CD4-positive, alpha-beta T cell (primary cell): ENCODE measurements at regions of chr5 and their contacts with region 1.

Region 1: GRCh38 chr5:170100066-170100943 is 5.4 kb upstream of the FOXI1 start:
- DNase-seq: peak; percentile 48 to 79 (median 60)
- ATAC-seq: peak; percentile 56
- H3K4me3 ChIP-seq: no peak overlapping the region
- H3K4me3 Mint-ChIP-seq: no peak overlapping the region
- H3K27ac ChIP-seq: no peak overlapping the region
- H3K27ac Mint-ChIP-seq: no peak overlapping the region
- H3K4me1 ChIP-seq: peaks cover 2% of the 10 kb centered on the region
- H3K4me1 Mint-ChIP-seq: no peaks in the 10 kb centered on the region
- H3K27me3 ChIP-seq: no peaks in the 10 kb centered on the region
- H3K27me3 Mint-ChIP-seq: peaks cover 20% of the 10 kb centered on the region
- CTCF ChIP-seq: peak; percentile 67

Region 2: DNA sequence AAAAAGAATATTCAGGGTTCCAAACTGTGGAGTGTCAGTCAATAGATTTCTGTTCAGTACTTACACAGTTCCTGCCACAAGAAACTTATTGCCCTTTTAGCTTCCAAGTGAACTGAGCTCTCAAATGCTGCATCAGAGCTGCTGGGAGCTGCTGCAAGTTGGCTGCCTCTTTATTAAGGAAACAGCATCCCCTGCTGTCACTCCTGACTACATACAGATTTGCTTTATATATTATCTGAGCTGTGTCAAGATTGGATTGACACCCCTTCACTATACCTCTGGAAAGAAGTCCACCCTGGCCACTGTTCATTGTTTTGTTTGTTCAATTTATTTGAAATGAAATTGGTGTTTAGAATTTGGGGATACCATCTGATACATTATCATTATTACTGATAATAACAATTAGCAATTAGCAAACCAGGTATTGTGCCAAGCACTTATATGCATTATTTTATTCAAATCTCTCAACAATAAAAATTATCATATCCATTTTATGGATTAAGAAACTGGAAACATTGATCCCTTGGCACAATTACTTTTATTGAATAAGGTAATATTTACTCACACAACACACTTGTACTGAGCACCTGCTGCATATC is 116.1 kb after region 1 on chr5:
- CTCF ChIA-PET with region 1: no interaction called
- POLR2A ChIA-PET with region 1: no interaction called
- intact Hi-C with region 1: loop called in 1 of 2 experiments (anchors 2 kb)
- DNase-seq: peak in 4 of 14 experiments; percentile 1 to 38 (median 20)
- ATAC-seq: no peak
- H3K4me3 ChIP-seq: no peak overlapping the region
- H3K4me3 Mint-ChIP-seq: no peak overlapping the region
- H3K27ac ChIP-seq: no peak overlapping the region
- H3K27ac Mint-ChIP-seq: no peak overlapping the region
- H3K4me1 ChIP-seq: no peaks in the 10 kb centered on the region
- H3K4me1 Mint-ChIP-seq: no peaks in the 10 kb centered on the region
- H3K27me3 ChIP-seq: no peaks in the 10 kb centered on the region
- H3K27me3 Mint-ChIP-seq: peaks cover 16% of the 10 kb centered on the region
- CTCF ChIP-seq: no peak

Region 3: DNA sequence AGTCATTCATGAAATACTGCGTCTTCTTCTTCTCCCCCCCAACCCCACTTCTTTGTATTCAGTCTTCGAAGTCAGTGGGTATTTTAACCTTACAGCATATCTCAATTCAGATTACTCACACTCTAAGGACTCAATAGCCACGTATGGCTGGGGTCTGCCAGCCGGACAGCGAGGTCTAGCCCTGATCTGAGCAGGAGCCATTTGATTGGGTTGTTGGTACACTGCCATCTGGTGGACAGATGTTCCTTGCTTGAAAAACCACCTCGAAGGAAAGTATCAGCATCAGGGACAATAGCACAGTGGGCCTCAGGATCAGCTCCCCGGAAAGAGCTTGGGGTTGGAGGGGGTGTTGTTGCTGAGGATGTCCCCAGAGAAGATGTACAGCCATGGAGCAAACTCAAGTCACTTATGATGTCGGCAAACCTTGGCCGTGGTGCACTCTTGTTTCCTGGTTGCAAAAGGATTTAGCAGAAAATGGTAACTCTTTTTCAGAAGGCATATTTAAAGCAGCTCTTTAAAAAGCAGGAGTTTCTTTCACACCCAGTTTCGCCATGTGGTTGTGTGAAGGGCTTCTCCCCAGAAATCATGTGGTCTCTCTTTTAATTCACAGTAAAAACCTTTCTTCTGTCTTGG is 320.6 kb after region 1 on chr5:
- CTCF ChIA-PET with region 1: no interaction called
- POLR2A ChIA-PET with region 1: no interaction called
- intact Hi-C with region 1: loop called (anchors 1 kb)
- DNase-seq: peak in 13 of 14 experiments; percentile 11 to 81 (median 39)
- ATAC-seq: peak; percentile 55
- H3K4me3 ChIP-seq: no peak overlapping the region
- H3K4me3 Mint-ChIP-seq: no peak overlapping the region
- H3K27ac ChIP-seq: no peak overlapping the region
- H3K27ac Mint-ChIP-seq: no peak overlapping the region
- H3K4me1 ChIP-seq: peaks cover 18% of the 10 kb centered on the region
- H3K4me1 Mint-ChIP-seq: peaks cover 21% of the 10 kb centered on the region
- H3K27me3 ChIP-seq: no peaks in the 10 kb centered on the region
- H3K27me3 Mint-ChIP-seq: no peaks in the 10 kb centered on the region
- CTCF ChIP-seq: peak; percentile 81

Region 4: GRCh38 chr5:170633235-170634081 is 533.2 kb after region 1 on chr5:
- CTCF ChIA-PET with region 1: no interaction called
- POLR2A ChIA-PET with region 1: no interaction called
- intact Hi-C with region 1: loop called (anchors 1 to 2 kb)
- DNase-seq: peak in 2 of 14 experiments; percentile 29 to 39
- ATAC-seq: peak; percentile 51
- H3K4me3 ChIP-seq: peak overlapping the region; percentile 39
- H3K4me3 Mint-ChIP-seq: peak overlapping the region; percentile 77
- H3K27ac ChIP-seq: no peak overlapping the region
- H3K27ac Mint-ChIP-seq: peak overlapping the region; percentile 38
- H3K4me1 ChIP-seq: peaks cover 18% of the 10 kb centered on the region
- H3K4me1 Mint-ChIP-seq: peaks cover 20% of the 10 kb centered on the region
- H3K27me3 ChIP-seq: peaks cover 0 to 4% of the 10 kb centered on the region in 2 experiments
- H3K27me3 Mint-ChIP-seq: peaks cover 11% of the 10 kb centered on the region
- CTCF ChIP-seq: peak; percentile 64